Endothelial cell of umbilical vein (primary cell): ENCODE measurements at regions of chr16 and their contacts with region 1.

Region 1: DNA sequence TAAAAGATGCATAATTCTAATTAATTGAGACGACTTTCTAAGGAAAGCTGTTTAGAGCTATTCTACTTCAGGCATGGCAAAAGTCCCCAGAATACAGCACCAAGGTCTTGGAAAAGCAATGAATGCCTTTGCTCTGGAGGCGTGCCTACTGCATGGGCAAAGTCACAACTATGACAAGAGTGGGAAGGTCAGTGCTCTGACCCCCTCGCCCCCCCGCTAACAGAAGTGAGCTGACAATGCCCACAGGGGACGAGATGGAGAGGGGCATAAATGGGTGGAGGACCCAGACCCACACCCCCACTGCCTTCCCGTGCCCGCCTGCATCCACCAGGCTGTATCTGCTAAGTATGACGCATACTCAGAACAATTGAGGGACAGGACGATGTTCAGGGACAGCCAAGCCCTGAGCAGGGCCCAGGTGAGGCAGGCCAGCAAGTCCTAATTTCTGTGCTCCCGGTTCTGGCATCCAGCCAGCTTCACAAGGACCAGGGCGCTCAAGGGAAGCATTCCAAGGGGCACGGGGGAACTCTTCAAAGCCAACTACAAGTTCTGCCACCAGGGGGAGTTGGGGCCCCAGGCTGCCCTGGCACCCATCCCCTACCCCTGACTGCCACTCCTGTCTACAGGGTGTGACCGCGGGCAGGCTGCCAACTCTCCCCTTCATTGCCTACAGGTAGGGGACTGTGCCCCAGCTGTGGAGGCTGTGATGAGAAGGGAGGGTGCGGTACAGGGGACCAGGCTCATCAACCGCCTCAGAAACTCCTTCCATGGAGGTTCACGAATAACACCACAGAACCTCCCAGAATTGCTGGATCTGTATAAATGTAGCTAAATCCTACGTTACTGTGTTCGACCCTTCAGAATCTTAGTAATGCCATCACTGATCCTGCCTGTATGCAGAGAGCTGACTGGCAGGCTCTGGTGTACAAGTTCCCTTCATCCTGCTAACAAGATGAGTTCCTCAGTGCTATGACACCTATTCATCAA is 20.8 kb downstream of the NPRL3 start:
- DNase-seq: peak; percentile 48
- H3K4me3 ChIP-seq: no peak overlapping the region
- H3K27ac ChIP-seq: no peak overlapping the region
- H3K4me1 ChIP-seq: peaks cover 11% of the 10 kb centered on the region
- H3K27me3 ChIP-seq: no peaks in the 10 kb centered on the region
- CTCF ChIP-seq: peak; percentile 66 to 85
- POLR2A ChIP-seq: no peak

Region 2: GRCh38 chr16:77807-78443 is 39.7 kb before region 1 on chr16 and contains the start of gene MPG:
- CTCF ChIA-PET with region 1: no interaction called
- POLR2A ChIA-PET with region 1: no interaction called
- dilution Hi-C with region 1: no loop called
- intact Hi-C with region 1: no loop called
- DNase-seq: peak; percentile 69
- H3K4me3 ChIP-seq: peak within 1 kb of the TSS; percentile 13 to 73 (median 47)
- H3K27ac ChIP-seq: peak within 1 kb of the TSS; percentile 92
- H3K4me1 ChIP-seq: peaks cover 32% of the 10 kb centered on the region
- H3K27me3 ChIP-seq: no peaks in the 10 kb centered on the region
- CTCF ChIP-seq: no peak
- POLR2A ChIP-seq: peak; percentile 57
- total RNA-seq, gene MPG: 68.1 and 70.5 TPM in 2 replicates

Region 3: DNA sequence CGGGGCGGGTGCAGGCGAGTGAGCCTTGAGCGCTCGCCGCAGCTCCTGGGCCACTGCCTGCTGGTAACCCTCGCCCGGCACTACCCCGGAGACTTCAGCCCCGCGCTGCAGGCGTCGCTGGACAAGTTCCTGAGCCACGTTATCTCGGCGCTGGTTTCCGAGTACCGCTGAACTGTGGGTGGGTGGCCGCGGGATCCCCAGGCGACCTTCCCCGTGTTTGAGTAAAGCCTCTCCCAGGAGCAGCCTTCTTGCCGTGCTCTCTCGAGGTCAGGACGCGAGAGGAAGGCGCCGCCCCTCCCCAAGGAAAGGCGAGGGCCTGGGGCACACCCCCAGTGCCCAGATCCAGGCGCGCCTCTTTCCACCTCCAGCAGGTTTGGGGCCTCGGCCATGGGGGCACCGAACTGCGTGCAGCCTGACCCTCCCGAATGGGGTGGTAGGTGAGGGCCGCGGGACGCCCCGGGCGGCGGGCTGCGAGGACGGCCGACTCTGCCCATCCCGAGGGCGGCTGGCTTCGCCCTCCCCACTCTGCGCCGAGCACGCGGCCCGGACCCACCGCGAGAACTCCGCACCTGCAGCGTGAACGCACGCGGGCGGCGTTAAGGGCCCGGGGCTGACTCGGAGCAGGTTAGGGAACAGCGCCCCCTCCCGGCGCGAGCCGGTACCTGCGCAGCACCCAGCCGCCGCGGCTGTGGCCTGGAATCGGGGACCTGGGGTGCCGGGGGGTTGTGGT is 63.4 kb after region 1 on chr16:
- CTCF ChIA-PET with region 1: interaction called, 26 read pairs
- POLR2A ChIA-PET with region 1: no interaction called
- dilution Hi-C with region 1: no loop called
- intact Hi-C with region 1: loop called (anchors 2 kb)
- DNase-seq: peak; percentile 71
- H3K4me3 ChIP-seq: no peak overlapping the region
- H3K27ac ChIP-seq: no peak overlapping the region
- H3K4me1 ChIP-seq: peaks cover 5% of the 10 kb centered on the region
- H3K27me3 ChIP-seq: peaks cover 19 to 25% of the 10 kb centered on the region in 2 experiments
- CTCF ChIP-seq: peak; percentile 95 to 98
- POLR2A ChIP-seq: peak; percentile 48